Stomach (tissue), 19 donors: ENCODE measurements at regions of chr10 and their contacts with region 1.

Region 1: GRCh38 chr10:78053211-78053868 is 19.7 kb downstream of the RPS24 start:
- DNase-seq: peak in 1 of 2 donors; percentile 48
- H3K4me3 ChIP-seq: no peak overlapping the region
- H3K27ac ChIP-seq: no peak overlapping the region
- H3K4me1 ChIP-seq: no peaks in the 10 kb centered on the region
- H3K27me3 ChIP-seq: no peaks in the 10 kb centered on the region
- CTCF ChIP-seq: no peak
- EP300 ChIP-seq: no peak
- POLR2A ChIP-seq: no peak

Region 2: GRCh38 chr10:78185693-78186055 is 132.3 kb after region 1 on chr10:
- intact Hi-C with region 1: no loop called
- DNase-seq: no peak
- H3K4me3 ChIP-seq: no peak overlapping the region
- H3K27ac ChIP-seq: no peak overlapping the region
- H3K4me1 ChIP-seq: peaks cover 0 to 8% (median 2%) of the 10 kb centered on the region in 4 donors
- H3K27me3 ChIP-seq: peaks cover 0 to 6% (median 0%) of the 10 kb centered on the region in 3 donors
- CTCF ChIP-seq: no peak
- EP300 ChIP-seq: no peak
- POLR2A ChIP-seq: no peak

Region 3: DNA sequence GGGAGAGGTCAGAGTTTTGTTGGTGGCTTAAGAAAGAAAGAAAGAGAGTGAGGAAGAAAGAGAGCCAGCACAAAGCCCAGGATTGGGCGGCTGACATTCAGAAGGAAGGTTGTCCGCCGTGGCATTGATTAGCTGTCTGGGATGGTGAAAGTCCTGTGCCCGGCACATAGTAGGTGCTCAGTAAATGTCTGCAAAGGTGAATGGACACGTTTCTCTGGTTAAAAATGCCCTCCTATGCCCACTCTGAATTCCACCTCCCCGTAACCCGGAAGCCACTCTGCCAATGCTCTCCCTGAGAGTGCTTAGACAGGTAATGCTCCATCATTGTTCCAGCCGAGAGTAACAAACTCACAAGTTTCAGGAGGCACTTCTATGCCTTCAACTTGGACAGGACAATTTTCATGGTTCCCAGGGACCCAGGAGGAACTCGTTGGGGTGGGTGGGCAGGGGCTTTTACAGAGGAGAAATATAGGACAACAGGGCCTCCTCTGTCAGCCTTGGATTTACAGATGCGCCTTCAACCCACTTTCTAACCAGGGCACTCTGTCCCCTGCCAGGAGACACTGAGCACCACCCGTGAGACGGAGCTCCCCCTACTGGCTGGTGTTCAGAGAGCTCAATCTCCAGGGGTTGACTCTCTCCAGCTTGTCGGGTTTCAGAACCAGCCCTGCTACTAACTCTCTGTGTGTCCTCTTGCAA is 604.0 kb after region 1 on chr10:
- intact Hi-C with region 1: loop called (anchors 10 kb)
- DNase-seq: peak; percentile 86 to 88
- H3K4me3 ChIP-seq: no peak overlapping the region
- H3K27ac ChIP-seq: peak overlapping the region in 3 of 5 donors; percentile 20 to 44 (median 26)
- H3K4me1 ChIP-seq: peaks cover 0 to 17% (median 12%) of the 10 kb centered on the region in 4 donors
- H3K27me3 ChIP-seq: no peaks in the 10 kb centered on the region
- CTCF ChIP-seq: peak in 5 of 7 experiments; percentile 50 to 76 (median 55)
- EP300 ChIP-seq: no peak
- POLR2A ChIP-seq: no peak